CD8-positive, alpha-beta T cell (primary cell): ENCODE measurements at regions of chr16 and their contacts with region 1.

Region 1: GRCh38 chr16:24228514-24228913 is 27.6 kb upstream of the CACNG3 start:
- DNase-seq: no peak
- ATAC-seq: no peak
- H3K4me3 ChIP-seq: no peak overlapping the region
- H3K4me3 Mint-ChIP-seq: no peak overlapping the region
- H3K27ac ChIP-seq: no peak overlapping the region
- H3K27ac Mint-ChIP-seq: no peak overlapping the region
- H3K4me1 ChIP-seq: no peaks in the 10 kb centered on the region
- H3K4me1 Mint-ChIP-seq: no peaks in the 10 kb centered on the region
- H3K27me3 ChIP-seq: no peaks in the 10 kb centered on the region
- H3K27me3 Mint-ChIP-seq: peaks cover 10% of the 10 kb centered on the region
- CTCF ChIP-seq: no peak

Region 2: GRCh38 chr16:24178496-24178895 is 50.0 kb before region 1 on chr16:
- CTCF ChIA-PET with region 1: no interaction called
- POLR2A ChIA-PET with region 1: no interaction called
- intact Hi-C with region 1: no loop called
- DNase-seq: no peak
- ATAC-seq: no peak
- H3K4me3 ChIP-seq: no peak overlapping the region
- H3K4me3 Mint-ChIP-seq: no peak overlapping the region
- H3K27ac ChIP-seq: no peak overlapping the region
- H3K27ac Mint-ChIP-seq: no peak overlapping the region
- H3K4me1 ChIP-seq: no peaks in the 10 kb centered on the region
- H3K4me1 Mint-ChIP-seq: no peaks in the 10 kb centered on the region
- H3K27me3 ChIP-seq: no peaks in the 10 kb centered on the region
- H3K27me3 Mint-ChIP-seq: no peaks in the 10 kb centered on the region
- CTCF ChIP-seq: no peak

Region 3: GRCh38 chr16:24208710-24209109 is 19.8 kb before region 1 on chr16:
- CTCF ChIA-PET with region 1: no interaction called
- POLR2A ChIA-PET with region 1: no interaction called
- intact Hi-C with region 1: loop called in 1 of 2 experiments (anchors 2 kb)
- DNase-seq: no peak
- ATAC-seq: no peak
- H3K4me3 ChIP-seq: no peak overlapping the region
- H3K4me3 Mint-ChIP-seq: no peak overlapping the region
- H3K27ac ChIP-seq: no peak overlapping the region
- H3K27ac Mint-ChIP-seq: no peak overlapping the region
- H3K4me1 ChIP-seq: no peaks in the 10 kb centered on the region
- H3K4me1 Mint-ChIP-seq: no peaks in the 10 kb centered on the region
- H3K27me3 ChIP-seq: no peaks in the 10 kb centered on the region
- H3K27me3 Mint-ChIP-seq: no peaks in the 10 kb centered on the region
- CTCF ChIP-seq: no peak

Region 4: GRCh38 chr16:24309222-24309905 is 80.8 kb after region 1 on chr16:
- CTCF ChIA-PET with region 1: no interaction called
- POLR2A ChIA-PET with region 1: no interaction called
- intact Hi-C with region 1: no loop called
- DNase-seq: no peak
- ATAC-seq: no peak
- H3K4me3 ChIP-seq: no peak overlapping the region
- H3K4me3 Mint-ChIP-seq: no peak overlapping the region
- H3K27ac ChIP-seq: no peak overlapping the region
- H3K27ac Mint-ChIP-seq: no peak overlapping the region
- H3K4me1 ChIP-seq: no peaks in the 10 kb centered on the region
- H3K4me1 Mint-ChIP-seq: no peaks in the 10 kb centered on the region
- H3K27me3 ChIP-seq: peaks cover 0 to 2% of the 10 kb centered on the region in 2 experiments
- H3K27me3 Mint-ChIP-seq: peaks cover 19% of the 10 kb centered on the region
- CTCF ChIP-seq: no peak